ENCODE measurements at regions of chr3 and their contacts with region 1.

Region 1: GRCh38 chr3:68706096-68706495 is 226.3 kb downstream of the TAFA4 start:
- DNase-seq: no peak
- ATAC-seq: no peak
- H3K4me3 ChIP-seq: no peak overlapping the region
- H3K4me3 Mint-ChIP-seq: no peak overlapping the region
- H3K27ac ChIP-seq: no peak overlapping the region
- H3K27ac Mint-ChIP-seq: no peak overlapping the region
- H3K4me1 ChIP-seq: no peaks in the 10 kb centered on the region
- H3K4me1 Mint-ChIP-seq: no peaks in the 10 kb centered on the region
- H3K27me3 ChIP-seq: no peaks in the 10 kb centered on the region
- H3K27me3 Mint-ChIP-seq: no peaks in the 10 kb centered on the region
- CTCF ChIP-seq: no peak

Region 2: GRCh38 chr3:68681766-68682165 is 24.3 kb before region 1 on chr3:
- intact Hi-C with region 1: loop called (anchors 2 kb)
- DNase-seq: no peak
- ATAC-seq: no peak
- H3K4me3 ChIP-seq: no peak overlapping the region
- H3K4me3 Mint-ChIP-seq: no peak overlapping the region
- H3K27ac ChIP-seq: no peak overlapping the region
- H3K27ac Mint-ChIP-seq: no peak overlapping the region
- H3K4me1 ChIP-seq: no peaks in the 10 kb centered on the region
- H3K4me1 Mint-ChIP-seq: no peaks in the 10 kb centered on the region
- H3K27me3 ChIP-seq: no peaks in the 10 kb centered on the region
- H3K27me3 Mint-ChIP-seq: no peaks in the 10 kb centered on the region
- CTCF ChIP-seq: no peak

Region 3: GRCh38 chr3:68764554-68764953 is 58.5 kb after region 1 on chr3:
- intact Hi-C with region 1: loop called (anchors 5 kb)
- DNase-seq: no peak
- ATAC-seq: no peak
- H3K4me3 ChIP-seq: no peak overlapping the region
- H3K4me3 Mint-ChIP-seq: no peak overlapping the region
- H3K27ac ChIP-seq: no peak overlapping the region
- H3K27ac Mint-ChIP-seq: no peak overlapping the region
- H3K4me1 ChIP-seq: no peaks in the 10 kb centered on the region
- H3K4me1 Mint-ChIP-seq: no peaks in the 10 kb centered on the region
- H3K27me3 ChIP-seq: no peaks in the 10 kb centered on the region
- H3K27me3 Mint-ChIP-seq: no peaks in the 10 kb centered on the region
- CTCF ChIP-seq: no peak

Measured in natural killer cell (primary cell).